Mammary epithelial cell (primary cell): ENCODE measurements at regions of chr15 and their contacts with region 1.

Region 1: DNA sequence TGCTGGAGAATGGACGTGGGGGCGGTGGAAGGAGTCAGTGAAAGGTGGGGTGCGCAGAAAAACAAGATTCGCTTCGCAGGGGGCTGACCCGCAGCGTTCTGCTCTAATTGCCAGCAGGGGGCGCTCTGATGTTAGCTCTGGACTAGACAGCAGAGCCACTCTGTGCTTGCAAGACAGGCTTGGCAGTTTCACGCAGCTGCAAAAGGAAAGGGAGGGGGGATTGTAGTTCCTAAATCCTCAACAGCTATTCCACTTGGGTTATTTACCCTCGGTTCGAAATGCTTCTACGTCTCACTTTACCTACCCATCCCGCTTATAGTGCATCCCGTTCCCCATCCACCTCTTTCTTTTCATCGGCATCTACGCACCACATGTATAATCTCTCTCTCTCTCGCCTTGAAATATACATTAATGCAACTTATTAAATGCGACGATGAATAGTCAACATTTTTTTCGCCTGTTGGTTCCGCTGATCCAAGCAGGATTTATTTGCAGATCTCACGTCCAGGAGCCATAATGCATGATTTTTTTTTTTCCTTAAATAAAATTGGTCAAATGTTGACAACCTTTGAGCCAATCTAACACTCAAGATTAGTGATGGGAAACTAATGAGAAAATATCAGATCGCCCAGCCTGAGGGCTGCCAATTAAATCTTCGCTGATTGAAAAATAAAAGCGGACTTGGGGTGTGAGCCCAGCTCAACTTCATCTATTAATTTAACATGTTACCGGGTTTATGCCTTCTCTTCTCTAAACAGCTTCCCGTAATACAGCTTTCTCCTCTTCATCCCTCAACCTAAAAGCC is 216.4 kb downstream of the MEIS2 start:
- DNase-seq: peak; percentile 53
- H3K4me3 ChIP-seq: no peak overlapping the region
- H3K27ac ChIP-seq: no peak overlapping the region
- H3K4me1 ChIP-seq: peaks cover 6% of the 10 kb centered on the region
- H3K27me3 ChIP-seq: peaks cover 33% of the 10 kb centered on the region
- CTCF ChIP-seq: peak; percentile 65 to 89

Region 2: GRCh38 chr15:36501063-36501678 is 382.7 kb before region 1 on chr15:
- CTCF ChIA-PET with region 1: no interaction called
- dilution Hi-C with region 1: no loop called
- in situ Hi-C with region 1: no loop called
- intact Hi-C with region 1: loop called (anchors 2 kb)
- DNase-seq: peak; percentile 63
- H3K4me3 ChIP-seq: no peak overlapping the region
- H3K27ac ChIP-seq: no peak overlapping the region
- H3K4me1 ChIP-seq: no peaks in the 10 kb centered on the region
- H3K27me3 ChIP-seq: no peaks in the 10 kb centered on the region
- CTCF ChIP-seq: peak; percentile 73 to 95

Region 3: GRCh38 chr15:36653851-36654250 is 230.1 kb before region 1 on chr15:
- CTCF ChIA-PET with region 1: no interaction called
- dilution Hi-C with region 1: no loop called
- in situ Hi-C with region 1: no loop called
- intact Hi-C with region 1: loop called (anchors 5 kb)
- DNase-seq: peak; percentile 90
- H3K4me3 ChIP-seq: no peak overlapping the region
- H3K27ac ChIP-seq: no peak overlapping the region
- H3K4me1 ChIP-seq: peaks cover 7% of the 10 kb centered on the region
- H3K27me3 ChIP-seq: no peaks in the 10 kb centered on the region
- CTCF ChIP-seq: no peak

Region 4: GRCh38 chr15:37076543-37076942 is 192.6 kb after region 1 on chr15:
- CTCF ChIA-PET with region 1: no interaction called
- dilution Hi-C with region 1: no loop called
- in situ Hi-C with region 1: no loop called
- intact Hi-C with region 1: no loop called
- DNase-seq: no peak
- H3K4me3 ChIP-seq: no peak overlapping the region
- H3K27ac ChIP-seq: no peak overlapping the region
- H3K4me1 ChIP-seq: no peaks in the 10 kb centered on the region
- H3K27me3 ChIP-seq: no peaks in the 10 kb centered on the region
- CTCF ChIP-seq: no peak

Region 5: GRCh38 chr15:37106490-37107001 is 222.6 kb after region 1 on chr15:
- CTCF ChIA-PET with region 1: no interaction called
- dilution Hi-C with region 1: no loop called
- in situ Hi-C with region 1: loop called in 1 of 2 experiments (anchors 10 kb)
- intact Hi-C with region 1: loop called (anchors 1 kb)
- DNase-seq: no peak
- H3K4me3 ChIP-seq: no peak overlapping the region
- H3K27ac ChIP-seq: no peak overlapping the region
- H3K4me1 ChIP-seq: peaks cover 4% of the 10 kb centered on the region
- H3K27me3 ChIP-seq: peaks cover 10% of the 10 kb centered on the region
- CTCF ChIP-seq: peak in 1 of 2 donors; percentile 26

Region 6: DNA sequence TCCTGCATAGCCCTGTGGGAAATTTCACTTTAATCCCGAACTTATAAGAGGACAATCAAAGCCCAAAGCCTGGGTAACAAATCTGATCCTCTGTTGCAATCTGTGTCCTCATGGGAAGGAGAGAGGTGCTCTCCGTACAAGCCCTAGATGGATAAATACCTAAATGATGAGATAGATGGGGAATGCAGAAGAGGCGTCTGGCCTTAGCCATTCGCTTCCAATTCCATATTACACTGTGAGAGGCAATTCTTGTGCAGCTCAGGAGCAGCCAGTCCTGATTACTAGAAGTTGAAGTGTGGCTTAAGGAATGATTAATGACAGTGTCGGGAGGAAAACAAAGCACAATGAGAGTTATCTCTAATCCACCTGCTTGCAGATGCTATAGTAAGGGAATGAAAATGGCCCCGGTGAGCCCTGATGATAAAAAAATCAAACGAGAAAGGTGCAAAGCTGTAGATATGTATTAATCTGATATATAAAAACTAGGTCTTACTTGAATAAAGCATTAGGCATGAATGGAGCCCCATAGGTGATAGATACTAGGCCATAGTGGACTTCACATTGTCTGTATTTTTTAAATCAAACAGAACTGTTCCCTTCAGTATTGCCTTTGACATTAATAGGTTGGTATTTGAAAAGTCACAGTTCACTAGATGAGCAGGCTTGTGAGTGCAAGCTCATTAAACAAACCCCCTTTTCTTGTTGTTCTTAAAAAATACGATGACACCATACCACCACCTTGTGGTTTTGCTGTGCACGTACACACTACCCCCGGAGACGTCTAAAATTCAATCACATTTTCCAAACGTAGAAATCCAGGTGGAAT is 996.3 kb after region 1 on chr15:
- CTCF ChIA-PET with region 1: no interaction called
- dilution Hi-C with region 1: no loop called
- in situ Hi-C with region 1: loop called (anchors 25 kb)
- intact Hi-C with region 1: loop called (anchors 5 kb)
- DNase-seq: peak; percentile 16
- H3K4me3 ChIP-seq: no peak overlapping the region
- H3K27ac ChIP-seq: no peak overlapping the region
- H3K4me1 ChIP-seq: no peaks in the 10 kb centered on the region
- H3K27me3 ChIP-seq: peaks cover 3% of the 10 kb centered on the region
- CTCF ChIP-seq: peak; percentile 73 to 74